ENCODE measurements at regions of chr5 and their contacts with region 1.

Region 1: DNA sequence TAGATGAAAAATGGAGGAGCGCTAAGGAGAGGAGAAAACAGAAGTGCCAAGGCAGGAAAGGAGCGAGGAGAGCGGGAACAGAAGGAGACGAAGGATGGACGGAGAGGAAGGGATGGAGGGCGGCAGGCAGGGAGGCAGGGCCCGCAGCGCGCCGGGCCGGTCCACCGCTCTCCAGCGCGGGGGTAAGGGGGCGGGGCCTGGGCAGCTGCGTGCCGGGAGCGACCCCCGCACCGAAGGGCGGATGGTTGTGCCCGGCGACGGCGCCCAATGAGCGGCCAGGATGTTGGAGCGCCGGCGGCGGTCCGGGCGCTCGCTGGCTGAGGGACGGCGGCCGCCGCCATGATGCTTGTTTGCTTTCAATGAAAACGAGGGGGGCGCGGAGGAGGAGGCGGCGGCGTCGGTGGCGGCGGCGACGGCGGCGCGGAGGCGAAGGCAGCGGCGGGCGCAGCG is at the start of gene CNOT6:
- DNase-seq: peak; percentile 94
- H3K4me3 Mint-ChIP-seq: peak within 1 kb of the TSS; percentile 90
- H3K27ac Mint-ChIP-seq: peak within 1 kb of the TSS; percentile 93
- H3K4me1 Mint-ChIP-seq: peaks cover 37% of the 10 kb centered on the region
- H3K27me3 Mint-ChIP-seq: no peaks in the 10 kb centered on the region
- total RNA-seq, gene CNOT6: 48.8 and 49.7 TPM in 2 replicates

Region 2: GRCh38 chr5:178859625-178860531 is 1634.2 kb before region 1 on chr5 and contains the start of gene ZNF354B:
- intact Hi-C with region 1: loop called (anchors 5 kb)
- DNase-seq: peak; percentile 79
- H3K4me3 Mint-ChIP-seq: peak within 1 kb of the TSS; percentile 88
- H3K27ac Mint-ChIP-seq: peak within 1 kb of the TSS; percentile 75
- H3K4me1 Mint-ChIP-seq: peaks cover 25% of the 10 kb centered on the region
- H3K27me3 Mint-ChIP-seq: no peaks in the 10 kb centered on the region
- total RNA-seq, gene ZNF354B: 15.2 and 15.3 TPM in 2 replicates

Region 3: GRCh38 chr5:180353048-180353979 is 140.8 kb before region 1 on chr5 and contains the start of gene GFPT2:
- intact Hi-C with region 1: loop called (anchors 10 kb)
- DNase-seq: peak; percentile 61
- H3K4me3 Mint-ChIP-seq: peak within 1 kb of the TSS; percentile 70
- H3K27ac Mint-ChIP-seq: no peak within 1 kb of the TSS
- H3K4me1 Mint-ChIP-seq: no peaks in the 10 kb centered on the region
- H3K27me3 Mint-ChIP-seq: peaks cover 50% of the 10 kb centered on the region
- total RNA-seq, gene GFPT2: 1.1 and 1.4 TPM in 2 replicates

Region 4: DNA sequence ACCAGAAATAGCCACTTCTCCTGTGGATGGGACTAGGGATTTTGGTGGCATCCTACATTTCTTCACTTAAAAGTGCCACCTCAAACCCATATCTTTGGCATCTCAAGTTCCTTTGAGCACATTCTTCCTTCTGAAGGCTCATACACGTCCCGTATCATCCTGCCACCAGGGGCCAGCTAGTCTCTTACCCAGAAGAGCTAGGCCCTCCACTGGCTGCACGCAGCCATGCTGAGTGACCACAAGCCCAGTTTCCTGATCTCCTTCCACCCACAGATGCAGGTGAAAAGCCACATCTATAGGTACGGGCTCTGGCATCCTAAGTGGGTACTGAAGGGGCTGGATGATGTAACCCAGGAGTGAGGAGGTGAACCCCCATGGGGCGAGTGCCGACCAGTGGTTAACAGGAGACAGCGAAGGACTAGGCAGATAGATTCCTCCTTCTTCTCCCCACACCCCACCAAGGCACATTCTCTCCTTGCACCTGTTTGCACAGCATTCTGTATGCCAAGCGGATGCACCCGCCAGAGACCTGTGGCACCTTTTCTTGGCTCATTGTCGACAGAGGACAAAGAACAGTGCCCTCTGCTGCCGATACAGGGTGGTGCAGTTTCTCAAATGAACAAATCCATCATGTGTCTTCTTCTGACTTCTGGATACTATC is 111.6 kb after region 1 on chr5:
- intact Hi-C with region 1: loop called (anchors 5 kb)
- DNase-seq: peak; percentile 32
- H3K4me3 Mint-ChIP-seq: no peak overlapping the region
- H3K27ac Mint-ChIP-seq: no peak overlapping the region
- H3K4me1 Mint-ChIP-seq: no peaks in the 10 kb centered on the region
- H3K27me3 Mint-ChIP-seq: peaks cover 3% of the 10 kb centered on the region

Region 5: GRCh38 chr5:180816608-180817534 is 322.8 kb after region 1 on chr5:
- intact Hi-C with region 1: no loop called
- DNase-seq: no peak
- H3K4me3 Mint-ChIP-seq: no peak overlapping the region
- H3K27ac Mint-ChIP-seq: no peak overlapping the region
- H3K4me1 Mint-ChIP-seq: peaks cover 33% of the 10 kb centered on the region
- H3K27me3 Mint-ChIP-seq: peaks cover 6% of the 10 kb centered on the region

Region 6: DNA sequence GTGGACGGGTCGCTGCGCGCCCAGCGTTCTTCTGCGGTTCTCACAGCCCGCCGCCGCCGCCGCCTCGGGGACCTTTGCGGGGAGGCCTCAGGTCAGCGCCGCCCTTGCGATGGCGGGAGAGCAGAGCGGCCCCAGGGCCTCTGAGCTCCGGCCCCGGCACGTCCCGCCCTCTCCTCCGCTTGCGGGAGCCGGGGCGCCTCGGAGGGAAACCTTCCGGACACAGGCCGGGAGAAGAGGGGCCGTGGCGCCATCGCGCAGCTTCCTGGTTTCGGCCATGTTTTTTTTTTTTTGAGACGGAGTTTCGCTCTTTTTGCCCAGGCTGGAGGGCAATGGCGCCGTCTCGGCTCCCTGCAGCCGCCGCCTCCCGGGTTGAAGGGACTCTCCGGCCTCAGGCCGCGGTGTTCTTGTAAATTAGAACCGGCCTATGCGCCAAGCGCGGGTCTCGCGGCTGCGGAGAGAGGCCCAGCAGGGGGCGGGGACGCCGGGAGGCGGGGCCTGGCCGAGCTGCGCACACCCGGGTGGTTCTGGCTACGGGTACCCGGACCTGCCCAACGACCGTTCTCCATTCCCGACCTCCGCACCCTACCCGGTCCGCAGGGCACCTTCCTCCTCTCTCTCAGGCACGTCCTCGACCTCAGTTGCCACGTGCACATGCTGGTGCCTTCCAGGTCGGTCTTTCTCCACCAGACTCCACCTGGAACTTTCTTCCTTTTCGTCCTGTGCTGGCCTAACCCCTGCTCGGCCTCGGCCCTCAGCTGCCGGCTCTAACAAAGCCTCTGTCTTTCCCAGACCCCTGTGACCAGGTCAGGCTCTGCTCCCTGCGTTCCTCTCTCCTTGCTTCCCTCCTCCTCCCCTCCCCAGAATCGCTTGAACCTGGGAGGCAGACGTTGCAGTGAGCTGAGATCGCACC is 337.3 kb after region 1 on chr5:
- intact Hi-C with region 1: loop called (anchors 10 kb)
- DNase-seq: peak; percentile 76
- H3K4me3 Mint-ChIP-seq: peak overlapping the region; percentile 91
- H3K27ac Mint-ChIP-seq: peak overlapping the region; percentile 99
- H3K4me1 Mint-ChIP-seq: peaks cover 33% of the 10 kb centered on the region
- H3K27me3 Mint-ChIP-seq: no peaks in the 10 kb centered on the region

Measured in activated T-helper 1 cell treated with anti-CD3 and anti-CD28 coated beads, Interleukin-12 subunit alpha, Interleukin-12 subunit beta, Interleukin-2, Interleukin-4 antibody, amounts not matched to agents 30 ng/mL and 10 ng/mL and 1 ng/mL, durations not matched to agents 14 hours and 24 hours and 36 hours (primary cell).